ENCODE measurements at regions of chr6 and their contacts with region 1.

Region 1: GRCh38 chr6:537114-537513 is 119.8 kb downstream of the HUS1B start:
- DNase-seq: no peak
- ATAC-seq: no peak

Region 2: DNA sequence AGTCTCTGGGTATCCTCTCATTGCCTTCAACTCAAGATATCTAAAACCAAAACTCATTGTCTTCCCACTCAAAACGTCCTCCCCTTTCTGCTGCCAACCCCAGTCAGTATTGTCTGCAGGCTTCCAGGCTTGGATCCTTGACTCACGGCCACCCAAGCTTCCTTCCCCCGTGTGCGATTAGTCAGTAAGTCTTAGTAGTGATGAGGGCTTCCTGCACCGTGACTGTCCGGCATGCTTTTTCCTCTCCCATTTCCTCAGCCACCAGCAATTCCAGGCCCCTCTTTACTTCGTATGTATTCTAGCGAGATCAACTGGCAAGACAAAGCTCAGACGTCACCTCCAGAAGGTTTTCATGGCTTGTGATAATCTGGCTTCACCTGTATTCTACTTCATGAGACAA is 333.5 kb before region 1 on chr6:
- intact Hi-C with region 1: no loop called
- DNase-seq: no peak
- ATAC-seq: no peak

Region 3: GRCh38 chr6:1309366-1309765 is 772.3 kb after region 1 on chr6:
- intact Hi-C with region 1: loop called (anchors 5 kb)
- DNase-seq: no peak
- ATAC-seq: no peak